ENCODE measurements at regions of chr17 and their contacts with region 1.

Region 1: DNA sequence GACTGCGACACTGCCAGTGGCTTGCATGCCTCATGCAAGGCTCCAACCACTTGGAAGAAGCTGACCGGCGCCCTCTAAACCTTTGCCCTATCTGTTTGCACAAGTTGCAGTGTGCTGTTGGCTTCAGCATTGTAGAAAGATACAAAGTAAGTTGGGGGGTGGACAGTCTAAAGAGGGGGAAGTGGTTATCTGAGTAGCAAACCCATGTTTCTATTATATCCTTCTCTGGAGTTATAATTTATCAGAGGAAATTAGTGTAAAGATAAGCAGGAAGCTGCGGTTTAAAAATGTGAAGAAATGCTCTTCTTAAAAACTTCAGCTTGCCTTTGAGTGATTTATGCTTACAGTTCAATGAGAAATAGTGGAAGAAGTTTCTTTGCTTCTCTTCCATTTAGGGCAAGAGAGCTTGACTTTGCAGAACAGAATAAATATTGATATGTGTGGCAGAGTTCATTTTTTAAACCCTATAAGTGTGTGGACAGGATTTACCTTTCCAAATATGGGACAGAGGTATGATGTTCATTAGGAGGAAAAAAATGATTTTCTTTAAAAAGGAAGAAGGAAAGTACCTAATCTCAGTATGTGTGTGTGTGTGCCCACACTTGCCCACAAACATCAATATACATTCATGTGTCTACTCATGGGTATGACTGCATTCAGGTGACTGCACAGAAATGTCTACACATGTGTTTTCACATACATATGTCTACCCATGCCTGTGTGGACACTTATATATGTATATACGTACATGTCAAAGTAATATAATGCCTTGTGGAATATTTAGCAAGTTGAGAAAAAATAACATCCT is 8.1 kb downstream of the AMZ2 start:
- DNase-seq: no peak
- ATAC-seq: no peak
- H3K4me3 ChIP-seq: no peak overlapping the region
- H3K27ac ChIP-seq: no peak overlapping the region
- H3K4me1 ChIP-seq: peaks cover 0 to 7% of the 10 kb centered on the region in 2 donors
- H3K27me3 ChIP-seq: no peaks in the 10 kb centered on the region
- CTCF ChIP-seq: no peak
- POLR2A ChIP-seq: no peak

Region 2: DNA sequence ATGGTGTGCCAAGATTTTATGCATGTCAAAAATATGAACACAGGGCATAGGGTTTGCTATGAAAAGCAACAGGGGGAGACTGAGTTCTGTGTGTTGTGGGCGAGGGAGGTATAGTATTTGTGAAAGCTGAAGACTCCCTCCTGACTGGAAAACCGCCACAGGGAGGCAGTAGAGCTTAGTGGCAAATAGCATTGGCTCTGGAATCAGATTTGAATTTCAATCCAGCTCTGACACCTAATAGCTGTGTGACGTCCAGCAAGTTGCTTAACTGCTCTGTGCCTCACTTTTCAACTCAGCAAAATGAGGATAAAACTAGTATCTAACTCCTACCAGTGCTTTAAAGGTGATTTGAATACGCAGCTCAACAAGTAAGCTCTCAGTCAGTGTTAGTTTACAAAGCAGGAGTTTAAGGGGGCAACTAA is 198.4 kb before region 1 on chr17:
- in situ Hi-C with region 1: no loop called
- intact Hi-C with region 1: no loop called
- DNase-seq: no peak
- ATAC-seq: no peak
- H3K4me3 ChIP-seq: no peak overlapping the region
- H3K27ac ChIP-seq: no peak overlapping the region
- H3K4me1 ChIP-seq: peaks cover 0 to 4% of the 10 kb centered on the region in 2 donors
- H3K27me3 ChIP-seq: no peaks in the 10 kb centered on the region
- CTCF ChIP-seq: peak in 2 of 5 experiments; percentile 14 to 24
- POLR2A ChIP-seq: no peak

Region 3: GRCh38 chr17:68398691-68399637 is 143.0 kb after region 1 on chr17:
- in situ Hi-C with region 1: loop called in 3 of 4 experiments (anchors 5 to 10 kb)
- intact Hi-C with region 1: no loop called
- DNase-seq: peak in 1 of 2 donors; percentile 63
- ATAC-seq: peak; percentile 72 to 81
- H3K4me3 ChIP-seq: no peak overlapping the region
- H3K27ac ChIP-seq: peak overlapping the region in 3 of 4 donors; percentile 5 to 52 (median 15)
- H3K4me1 ChIP-seq: peaks cover 20 to 23% of the 10 kb centered on the region in 2 donors
- H3K27me3 ChIP-seq: no peaks in the 10 kb centered on the region
- CTCF ChIP-seq: peak; percentile 83 to 90 (median 86)
- POLR2A ChIP-seq: no peak

Region 4: DNA sequence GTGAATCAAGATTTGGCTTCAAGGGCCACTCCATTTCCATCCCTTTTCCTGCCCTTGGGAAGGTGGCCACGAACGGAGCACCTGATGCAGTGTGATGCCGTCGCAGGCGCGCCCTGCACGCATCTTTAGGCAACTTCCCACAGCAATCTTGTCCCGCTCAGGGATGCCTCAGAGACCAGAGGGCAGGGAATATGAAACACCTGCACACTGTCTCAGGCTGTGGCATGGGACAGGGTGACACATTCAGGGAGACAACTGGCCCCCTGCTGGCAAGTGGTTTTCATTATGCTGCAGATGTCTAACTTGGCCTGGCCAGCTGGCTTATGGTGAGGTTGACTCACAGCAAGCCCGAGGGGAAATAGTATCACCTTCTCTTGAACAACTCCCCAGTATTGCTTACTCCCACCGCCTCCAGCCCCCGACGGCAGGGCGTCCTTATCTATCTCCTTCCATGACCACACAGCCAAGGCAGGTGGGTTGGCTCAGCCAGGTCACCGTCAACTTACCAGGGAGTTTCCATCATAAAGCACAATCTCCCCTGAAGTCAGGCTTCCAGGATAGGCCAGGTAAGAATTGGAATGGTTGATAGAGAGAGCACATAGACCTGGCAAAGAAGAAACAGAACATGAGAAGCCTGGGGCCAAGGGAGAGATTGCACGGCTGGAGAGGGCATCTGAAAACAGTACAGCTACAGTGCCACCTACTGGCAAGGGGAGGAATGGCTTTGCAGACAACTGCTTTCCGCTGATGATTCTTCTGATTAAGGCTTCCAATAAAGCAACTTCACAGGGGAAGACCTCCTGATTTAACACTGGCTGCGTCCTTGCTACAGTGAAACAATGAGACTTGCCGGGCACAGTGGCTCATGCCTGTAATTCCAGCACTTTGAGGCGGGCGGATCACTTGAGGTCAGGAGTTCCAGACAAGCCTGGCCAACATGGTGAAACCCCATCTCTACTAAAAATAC is 180.2 kb after region 1 on chr17:
- in situ Hi-C with region 1: loop called in 2 of 4 experiments (anchors 10 kb)
- intact Hi-C with region 1: no loop called
- DNase-seq: peak; percentile 69 to 88
- ATAC-seq: peak; percentile 72 to 83
- H3K4me3 ChIP-seq: no peak overlapping the region
- H3K27ac ChIP-seq: peak overlapping the region; percentile 88 to 100 (median 95)
- H3K4me1 ChIP-seq: peaks cover 37% of the 10 kb centered on the region in 2 donors
- H3K27me3 ChIP-seq: no peaks in the 10 kb centered on the region
- CTCF ChIP-seq: peak; percentile 89 to 96 (median 94)
- POLR2A ChIP-seq: no peak

Measured in gastrocnemius medialis (tissue), 4 donors.